Posterior vena cava (tissue), 2 donors: ENCODE measurements at regions of chr16 and their contacts with region 1.

Region 1: DNA sequence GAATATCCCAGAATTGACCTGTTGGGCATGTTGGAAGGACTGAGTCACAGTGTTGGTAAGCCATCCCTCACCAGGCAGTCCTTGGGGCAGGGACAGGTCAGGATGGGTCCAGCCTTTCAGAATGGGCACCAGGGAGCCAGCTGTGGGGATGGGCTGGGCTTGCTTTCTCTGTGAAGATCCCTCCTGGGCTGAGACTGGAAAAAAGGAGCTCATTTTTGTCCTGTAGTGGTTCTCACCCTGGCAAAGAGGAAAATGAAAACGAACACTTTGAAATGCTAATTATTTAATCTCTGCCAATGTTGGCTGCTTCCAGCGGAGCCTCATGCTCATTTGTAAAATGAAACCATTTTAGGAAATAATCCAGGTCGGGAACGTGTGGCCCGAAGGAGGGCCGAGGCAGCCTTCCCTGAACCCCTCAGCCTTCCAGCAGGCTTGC is 237.5 kb upstream of the SALL1 start:
- DNase-seq: no peak

Region 2: DNA sequence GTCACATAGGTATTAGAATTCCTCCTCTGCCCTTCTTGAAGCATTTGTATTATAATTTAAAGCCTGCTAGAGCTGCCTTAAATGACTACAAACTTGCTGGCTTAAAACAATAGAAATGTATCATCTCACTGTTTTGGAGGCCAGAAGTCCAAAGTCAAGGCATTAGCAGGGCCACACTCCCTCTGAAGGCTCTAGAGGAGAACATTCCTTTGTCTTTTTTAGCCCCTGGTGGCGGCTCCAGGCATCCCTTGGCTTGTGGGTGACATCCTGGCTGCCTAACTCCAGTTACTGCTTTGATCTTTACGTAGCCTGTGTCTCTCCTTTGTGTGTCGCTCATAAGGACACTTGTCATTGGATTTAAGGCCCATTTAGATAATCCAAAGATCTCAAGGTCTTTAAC is 50.9 kb before region 1 on chr16:
- intact Hi-C with region 1: no loop called
- DNase-seq: no peak

Region 3: GRCh38 chr16:51357839-51358238 is 30.7 kb before region 1 on chr16:
- intact Hi-C with region 1: loop called in 1 of 2 experiments (anchors 1 kb)
- DNase-seq: no peak